ENCODE measurements at regions of chr19 and their contacts with region 1.

Region 1: DNA sequence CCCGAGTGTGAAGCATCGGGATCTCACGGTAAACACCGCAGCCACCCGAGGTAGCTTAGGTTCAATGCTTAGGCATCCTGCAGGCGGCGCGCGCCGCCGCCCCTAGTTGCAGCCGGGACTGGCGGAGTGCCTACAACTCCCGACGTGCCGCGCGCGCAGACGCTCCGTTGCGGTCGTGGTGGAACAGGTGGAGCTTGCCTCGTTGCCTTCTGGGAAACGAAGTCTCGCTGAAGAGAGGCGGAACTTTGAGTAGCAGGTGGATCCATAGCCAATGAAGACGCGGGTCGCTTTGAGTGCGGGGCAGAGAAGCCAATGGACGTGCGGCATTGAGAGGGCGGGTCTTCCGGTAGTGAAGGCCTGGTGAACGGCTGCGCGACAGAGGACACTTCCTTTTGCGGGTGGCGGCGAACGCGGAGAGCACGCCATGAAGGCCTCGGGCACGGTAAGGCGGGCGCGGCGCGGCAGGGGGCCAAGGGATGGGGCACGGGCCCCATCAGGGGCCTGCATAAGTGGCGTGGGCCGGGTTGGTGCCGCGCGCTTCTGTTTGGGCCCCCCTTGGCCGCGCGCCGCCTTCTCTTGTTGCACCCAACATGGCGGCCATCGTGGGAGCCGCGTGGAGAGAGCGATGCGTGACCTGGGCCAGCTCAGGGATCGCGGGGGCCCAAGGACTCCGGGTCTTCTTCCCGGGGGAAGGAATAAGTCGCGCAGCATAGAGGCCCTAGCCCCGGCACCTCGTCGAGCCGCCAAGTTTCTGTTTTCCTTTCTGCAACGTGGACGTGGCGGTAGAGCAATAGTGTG is at the start of gene RPL18A:
- DNase-seq: peak; percentile 99
- ATAC-seq: peak; percentile 92
- H3K4me3 Mint-ChIP-seq: peak within 1 kb of the TSS; percentile 99
- H3K27ac Mint-ChIP-seq: peak within 1 kb of the TSS; percentile 97
- H3K4me1 Mint-ChIP-seq: peaks cover 21% of the 10 kb centered on the region
- H3K27me3 Mint-ChIP-seq: peaks cover 5% of the 10 kb centered on the region
- CTCF ChIP-seq: no peak
- total RNA-seq, gene RPL18A: 2,950 to 3,448 TPM (median 3,445 TPM) in 3 replicates

Region 2: GRCh38 chr19:17766543-17767131 is 93.1 kb before region 1 on chr19:
- CTCF ChIA-PET with region 1: interaction called, 16 read pairs
- POLR2A ChIA-PET with region 1: interaction called, 8 read pairs
- DNase-seq: peak; percentile 94
- ATAC-seq: peak; percentile 79
- H3K4me3 Mint-ChIP-seq: peak overlapping the region; percentile 41
- H3K27ac Mint-ChIP-seq: no peak overlapping the region
- H3K4me1 Mint-ChIP-seq: peaks cover 12% of the 10 kb centered on the region
- H3K27me3 Mint-ChIP-seq: no peaks in the 10 kb centered on the region
- CTCF ChIP-seq: peak; percentile 59; the same call in 1 of the 2 replicates

Region 3: GRCh38 chr19:17841810-17842662 is 17.7 kb before region 1 on chr19:
- CTCF ChIA-PET with region 1: interaction called, 31 read pairs
- POLR2A ChIA-PET with region 1: interaction called, 6 read pairs
- DNase-seq: peak; percentile 99
- ATAC-seq: peak; percentile 92
- H3K4me3 Mint-ChIP-seq: peak overlapping the region; percentile 87
- H3K27ac Mint-ChIP-seq: no peak overlapping the region
- H3K4me1 Mint-ChIP-seq: peaks cover 4% of the 10 kb centered on the region
- H3K27me3 Mint-ChIP-seq: peaks cover 63% of the 10 kb centered on the region
- CTCF ChIP-seq: no peak

Region 4: GRCh38 chr19:17873786-17874757 is 14.3 kb after region 1 on chr19:
- CTCF ChIA-PET with region 1: interaction called, 46 read pairs
- POLR2A ChIA-PET with region 1: interaction called, 7 read pairs
- DNase-seq: peak; percentile 88
- ATAC-seq: peak; percentile 76
- H3K4me3 Mint-ChIP-seq: peak overlapping the region; percentile 68
- H3K27ac Mint-ChIP-seq: no peak overlapping the region
- H3K4me1 Mint-ChIP-seq: peaks cover 12% of the 10 kb centered on the region
- H3K27me3 Mint-ChIP-seq: peaks cover 13% of the 10 kb centered on the region
- CTCF ChIP-seq: no peak

Region 5: DNA sequence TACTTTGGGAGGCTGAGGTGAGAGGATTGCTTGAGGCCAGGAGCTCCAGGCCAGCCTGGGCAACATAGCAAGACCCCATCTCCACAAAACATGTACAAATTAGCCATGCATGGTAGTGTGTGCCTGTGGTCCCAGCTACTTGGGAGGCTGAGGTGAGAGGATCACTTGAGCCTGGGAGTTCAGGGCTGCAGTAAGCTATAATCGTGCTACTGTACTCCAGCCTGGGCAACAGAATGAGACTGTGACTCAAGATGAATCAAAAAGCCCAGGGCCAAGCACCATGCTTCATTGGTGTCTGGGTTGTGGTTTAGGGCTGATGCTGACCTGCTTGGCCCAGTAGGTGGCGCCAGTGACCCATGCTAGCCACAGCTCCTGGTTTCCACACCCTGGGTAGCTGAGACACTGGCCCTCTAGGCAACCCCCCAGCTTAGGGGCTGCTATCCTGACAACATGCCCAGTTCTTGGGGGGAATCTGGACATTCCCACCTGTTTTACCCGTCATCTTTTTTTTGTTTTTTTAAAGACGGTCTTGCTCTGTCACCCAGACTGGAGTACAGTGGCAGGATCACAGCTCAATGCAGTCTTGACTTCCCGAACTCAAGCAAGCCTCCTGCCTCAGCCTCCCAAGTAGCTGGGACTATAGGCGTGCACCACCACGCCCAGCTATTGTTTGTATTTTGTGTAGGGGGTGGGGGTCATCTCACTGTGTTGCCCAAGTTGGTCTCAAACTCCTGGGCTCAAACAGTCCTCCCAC is 78.5 kb after region 1 on chr19:
- CTCF ChIA-PET with region 1: interaction called, 148 read pairs
- POLR2A ChIA-PET with region 1: interaction called, 41 read pairs
- DNase-seq: peak; percentile 85
- ATAC-seq: peak; percentile 75
- H3K4me3 Mint-ChIP-seq: no peak overlapping the region
- H3K27ac Mint-ChIP-seq: no peak overlapping the region
- H3K4me1 Mint-ChIP-seq: peaks cover 16% of the 10 kb centered on the region
- H3K27me3 Mint-ChIP-seq: no peaks in the 10 kb centered on the region; the same call in 1 of the 2 replicates
- CTCF ChIP-seq: peak; percentile 92

Region 6: DNA sequence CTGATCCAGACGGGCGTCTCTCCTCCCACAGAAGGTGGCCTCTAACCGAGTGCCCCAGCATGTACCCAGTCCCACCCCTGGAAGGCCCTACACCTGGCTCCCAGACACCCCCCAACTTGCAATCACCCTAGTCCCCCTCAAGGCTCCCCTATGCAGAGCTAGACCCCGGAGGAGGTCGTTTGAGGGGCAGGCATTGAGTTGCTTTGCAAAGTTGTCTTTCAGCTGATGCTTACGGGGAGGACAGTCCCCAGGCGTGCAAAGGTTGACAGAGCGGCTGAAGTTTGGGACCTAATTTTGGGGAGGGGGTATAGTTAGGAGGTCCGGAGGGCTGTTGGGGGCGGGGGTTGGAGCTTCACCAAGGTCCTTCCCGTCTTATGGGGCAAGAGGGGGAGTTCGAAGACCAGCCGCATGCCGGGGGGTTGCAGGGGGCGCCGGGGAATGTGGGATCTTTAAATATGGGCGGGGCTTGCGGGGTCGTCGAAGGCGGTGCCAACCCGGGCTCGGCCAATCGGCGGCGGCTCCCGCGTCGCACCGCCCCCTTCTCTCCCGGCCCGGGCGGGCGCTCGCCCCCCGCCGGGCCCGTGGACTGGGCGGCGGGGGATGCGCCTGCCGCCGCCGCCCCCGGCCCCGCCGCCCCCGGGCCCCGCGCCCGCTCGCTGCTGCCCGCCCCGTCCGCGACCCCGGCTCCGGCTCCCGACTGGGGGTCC is 107.0 kb after region 1 on chr19 and contains the start of gene KCNN1:
- CTCF ChIA-PET with region 1: no interaction called
- POLR2A ChIA-PET with region 1: interaction called, 16 read pairs
- DNase-seq: peak; percentile 76
- ATAC-seq: peak; percentile 77
- H3K4me3 Mint-ChIP-seq: peak within 1 kb of the TSS; percentile 79
- H3K27ac Mint-ChIP-seq: no peak within 1 kb of the TSS
- H3K4me1 Mint-ChIP-seq: peaks cover 19% of the 10 kb centered on the region
- H3K27me3 Mint-ChIP-seq: peaks cover 14% of the 10 kb centered on the region
- CTCF ChIP-seq: no peak
- total RNA-seq, gene KCNN1: 15.3 to 18.0 TPM (median 17.2 TPM) in 3 replicates